ENCODE measurements at regions of chr14 and their contacts with region 1.

Region 1: DNA sequence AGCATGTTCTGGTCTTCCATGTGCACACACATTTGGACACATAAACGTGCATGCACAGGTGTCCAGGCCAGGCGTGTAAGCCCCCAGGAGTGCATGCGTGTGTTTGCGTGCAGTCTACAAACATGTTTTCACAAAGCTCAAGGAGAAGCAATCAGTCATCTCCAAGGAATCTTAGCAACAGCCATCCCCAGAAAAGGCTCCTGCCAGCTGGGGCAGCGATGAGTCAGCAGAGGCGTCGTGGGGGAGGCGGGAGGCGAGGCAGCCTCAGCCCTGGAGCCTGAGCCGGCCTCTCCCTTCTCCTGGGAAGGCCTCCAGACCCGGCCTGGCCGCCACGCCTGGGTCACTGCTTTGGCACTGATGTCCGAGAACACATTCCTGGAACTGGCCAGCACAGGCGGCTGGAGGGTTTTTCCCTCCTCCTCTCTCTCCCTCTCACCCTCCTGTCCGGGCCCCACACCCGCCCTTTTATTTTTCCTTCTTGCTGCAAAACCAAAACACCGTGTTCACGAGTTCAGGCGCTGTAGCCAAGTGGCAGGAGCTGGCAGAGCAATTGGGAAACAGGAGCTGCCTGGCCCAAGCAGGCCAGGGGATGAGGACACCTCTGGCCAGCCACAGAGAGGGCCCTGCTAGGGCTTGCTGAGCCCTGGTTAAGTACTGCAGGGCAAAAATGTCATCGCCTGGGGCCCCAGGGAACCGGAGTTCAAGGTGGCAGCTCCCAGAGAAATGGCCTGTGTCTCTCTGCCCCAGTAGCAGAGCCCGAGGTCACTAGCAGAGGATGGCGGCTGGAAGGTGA is 92.7 kb downstream of the LRRC74A start:
- DNase-seq: no peak
- CTCF ChIP-seq: no peak

Region 2: GRCh38 chr14:76929927-76930326 is 11.0 kb after region 1 on chr14:
- CTCF ChIA-PET with region 1: interaction called, 47 read pairs
- POLR2A ChIA-PET with region 1: interaction called, 8 read pairs
- DNase-seq: no peak
- CTCF ChIP-seq: no peak

Region 3: GRCh38 chr14:76953196-76954000 is 34.5 kb after region 1 on chr14:
- CTCF ChIA-PET with region 1: interaction called, 10 read pairs
- POLR2A ChIA-PET with region 1: no interaction called
- DNase-seq: peak; percentile 59
- CTCF ChIP-seq: no peak

Region 4: GRCh38 chr14:77086017-77086736 is 167.2 kb after region 1 on chr14:
- CTCF ChIA-PET with region 1: interaction called, 11 read pairs
- POLR2A ChIA-PET with region 1: no interaction called
- DNase-seq: peak; percentile 46
- CTCF ChIP-seq: no peak

Measured in GM10248 (cell line).